OCI-LY7 (cell line): ENCODE measurements at regions of chr13 and their contacts with region 1.

Region 1: GRCh38 chr13:27730191-27730590 is 62.1 kb upstream of the GSX1 start:
- DNase-seq: no peak
- H3K4me3 ChIP-seq: no peak overlapping the region
- H3K27ac ChIP-seq: no peak overlapping the region
- H3K4me1 ChIP-seq: no peaks in the 10 kb centered on the region
- CTCF ChIP-seq: no peak

Region 2: DNA sequence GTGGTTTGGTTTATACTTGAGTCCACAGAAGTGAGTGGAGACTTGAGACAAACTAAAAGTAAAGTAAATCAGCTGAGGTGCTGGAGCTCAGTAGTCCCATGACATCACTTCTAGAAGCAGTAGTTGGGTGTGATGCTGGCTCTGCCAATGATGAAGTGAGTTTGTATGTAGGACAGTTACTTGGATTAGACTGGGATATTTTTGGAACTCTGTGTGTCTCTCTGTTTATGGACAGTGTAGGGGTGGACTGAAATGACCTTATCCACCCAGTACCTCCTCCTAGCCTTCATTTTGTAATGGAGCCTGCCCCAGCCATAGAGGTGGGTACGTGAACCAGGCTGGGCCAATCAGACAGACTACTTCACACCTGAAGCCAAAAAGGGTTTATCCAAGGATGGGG is 56.3 kb before region 1 on chr13:
- CTCF ChIA-PET with region 1: no interaction called
- POLR2A ChIA-PET with region 1: interaction called, 10 read pairs
- intact Hi-C with region 1: no loop called
- DNase-seq: no peak
- H3K4me3 ChIP-seq: no peak overlapping the region
- H3K27ac ChIP-seq: no peak overlapping the region
- H3K4me1 ChIP-seq: no peaks in the 10 kb centered on the region
- CTCF ChIP-seq: no peak

Region 3: GRCh38 chr13:27878274-27878673 is 148.1 kb after region 1 on chr13:
- CTCF ChIA-PET with region 1: no interaction called
- POLR2A ChIA-PET with region 1: no interaction called
- intact Hi-C with region 1: no loop called
- DNase-seq: no peak
- H3K4me3 ChIP-seq: no peak overlapping the region
- H3K27ac ChIP-seq: no peak overlapping the region
- H3K4me1 ChIP-seq: no peaks in the 10 kb centered on the region
- CTCF ChIP-seq: no peak